B cell (primary cell): ENCODE measurements at regions of chr11 and their contacts with region 1.

Region 1: DNA sequence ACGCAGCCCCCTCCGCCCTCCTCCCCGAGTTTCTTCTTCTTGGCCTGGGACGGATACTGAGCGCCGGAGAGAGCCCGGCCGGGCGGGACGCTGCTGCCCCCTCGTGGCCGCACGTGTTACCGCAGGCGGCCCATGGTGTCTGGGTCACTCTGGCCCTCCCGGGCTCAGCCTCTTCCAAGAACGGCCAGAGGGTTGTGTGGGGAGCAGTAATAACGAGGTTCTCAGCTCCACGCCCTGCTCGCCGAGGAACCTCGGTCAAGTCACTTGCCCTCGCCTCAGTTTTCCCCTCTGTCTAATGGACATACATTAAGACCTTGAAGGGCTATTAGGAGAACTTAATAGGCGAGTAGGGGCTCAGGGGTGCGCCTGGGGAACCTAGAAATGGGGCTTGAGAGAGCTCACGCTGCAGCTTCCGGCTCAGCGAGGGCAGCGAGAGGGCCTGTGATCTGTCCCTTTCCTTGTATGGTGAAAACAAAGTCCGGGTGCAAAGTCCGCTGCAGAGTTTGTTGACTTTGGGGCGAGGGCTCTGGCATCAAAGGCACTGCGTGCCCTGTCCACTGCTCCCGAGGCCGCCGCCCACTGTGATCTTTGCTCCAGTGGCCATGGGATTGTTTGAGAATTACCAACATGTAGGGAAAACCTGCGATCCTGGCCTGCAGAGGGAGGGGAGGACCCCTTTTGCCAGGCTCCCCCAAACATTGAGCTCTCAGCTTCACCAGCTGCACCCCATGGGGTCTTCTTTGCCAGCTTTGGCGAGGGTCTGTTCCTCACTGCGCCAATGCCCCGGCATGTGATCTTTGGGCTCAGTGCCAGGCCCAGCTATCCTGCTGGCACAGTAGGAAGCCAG is 14.4 kb upstream of the LRP5 start:
- DNase-seq: peak; percentile 85
- ATAC-seq: peak; percentile 95
- H3K4me3 ChIP-seq: no peak overlapping the region
- H3K4me3 Mint-ChIP-seq: peak overlapping the region; percentile 69
- H3K27ac ChIP-seq: no peak overlapping the region
- H3K27ac Mint-ChIP-seq: peak overlapping the region; percentile 67
- H3K4me1 ChIP-seq: peaks cover 40 to 45% of the 10 kb centered on the region in 2 donors
- H3K4me1 Mint-ChIP-seq: peaks cover 36% of the 10 kb centered on the region
- H3K27me3 ChIP-seq: no peaks in the 10 kb centered on the region
- H3K27me3 Mint-ChIP-seq: no peaks in the 10 kb centered on the region
- CTCF ChIP-seq: peak; percentile 95

Region 2: DNA sequence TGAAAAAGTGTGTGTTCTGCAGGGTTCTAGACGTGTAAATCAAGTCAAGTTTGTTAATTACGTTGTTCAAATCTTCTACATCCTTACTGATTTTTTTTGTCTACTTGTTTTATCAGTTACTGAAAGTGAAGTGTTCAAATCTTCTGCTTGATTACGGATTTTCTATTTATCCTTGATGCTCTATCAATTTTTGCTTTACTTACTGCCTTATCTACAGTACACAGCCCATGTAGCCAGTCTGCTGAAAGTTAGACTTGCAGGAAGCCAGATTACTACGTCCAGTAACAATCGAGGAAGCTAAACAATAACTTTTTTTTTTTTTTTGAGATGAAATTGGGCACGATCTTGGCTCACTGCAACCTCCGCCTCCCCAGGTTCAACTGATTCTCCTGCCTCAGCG is 10.6 kb before region 1 on chr11:
- CTCF ChIA-PET with region 1: interaction called, 15 read pairs
- POLR2A ChIA-PET with region 1: interaction called, 3 read pairs
- intact Hi-C with region 1: no loop called
- DNase-seq: no peak
- ATAC-seq: no peak
- H3K4me3 ChIP-seq: no peak overlapping the region
- H3K4me3 Mint-ChIP-seq: no peak overlapping the region
- H3K27ac ChIP-seq: no peak overlapping the region
- H3K27ac Mint-ChIP-seq: no peak overlapping the region
- H3K4me1 ChIP-seq: peaks cover 6 to 12% of the 10 kb centered on the region in 2 donors
- H3K4me1 Mint-ChIP-seq: peaks cover 20% of the 10 kb centered on the region
- H3K27me3 ChIP-seq: no peaks in the 10 kb centered on the region
- H3K27me3 Mint-ChIP-seq: no peaks in the 10 kb centered on the region
- CTCF ChIP-seq: no peak

Region 3: GRCh38 chr11:68447015-68447801 is 149.2 kb after region 1 on chr11:
- CTCF ChIA-PET with region 1: interaction called, 5 read pairs
- POLR2A ChIA-PET with region 1: no interaction called
- intact Hi-C with region 1: loop called (anchors 1 kb)
- DNase-seq: peak; percentile 84
- ATAC-seq: peak; percentile 99
- H3K4me3 ChIP-seq: no peak overlapping the region
- H3K4me3 Mint-ChIP-seq: no peak overlapping the region
- H3K27ac ChIP-seq: no peak overlapping the region
- H3K27ac Mint-ChIP-seq: no peak overlapping the region
- H3K4me1 ChIP-seq: peaks cover 5 to 13% of the 10 kb centered on the region in 2 donors
- H3K4me1 Mint-ChIP-seq: peaks cover 11% of the 10 kb centered on the region
- H3K27me3 ChIP-seq: no peaks in the 10 kb centered on the region
- H3K27me3 Mint-ChIP-seq: no peaks in the 10 kb centered on the region
- CTCF ChIP-seq: peak; percentile 93